CD8-positive, alpha-beta memory T cell (primary cell): ENCODE measurements at regions of chr5 and their contacts with region 1.

Region 1: GRCh38 chr5:36870399-36871040 is 6.0 kb upstream of the NIPBL start:
- DNase-seq: peak in 2 of 5 donors; percentile 59 to 72
- H3K4me3 ChIP-seq: no peak overlapping the region
- H3K4me3 Mint-ChIP-seq: peak overlapping the region in 2 of 7 donors; percentile 9 to 39
- H3K27ac ChIP-seq: no peak overlapping the region
- H3K27ac Mint-ChIP-seq: peak overlapping the region in 2 of 8 donors; percentile 22 to 46
- H3K4me1 ChIP-seq: peaks cover 25% of the 10 kb centered on the region
- H3K4me1 Mint-ChIP-seq: peaks cover 36 to 55% (median 55%) of the 10 kb centered on the region in 3 donors
- H3K27me3 ChIP-seq: no peaks in the 10 kb centered on the region
- H3K27me3 Mint-ChIP-seq: no peaks in the 10 kb centered on the region

Region 2: DNA sequence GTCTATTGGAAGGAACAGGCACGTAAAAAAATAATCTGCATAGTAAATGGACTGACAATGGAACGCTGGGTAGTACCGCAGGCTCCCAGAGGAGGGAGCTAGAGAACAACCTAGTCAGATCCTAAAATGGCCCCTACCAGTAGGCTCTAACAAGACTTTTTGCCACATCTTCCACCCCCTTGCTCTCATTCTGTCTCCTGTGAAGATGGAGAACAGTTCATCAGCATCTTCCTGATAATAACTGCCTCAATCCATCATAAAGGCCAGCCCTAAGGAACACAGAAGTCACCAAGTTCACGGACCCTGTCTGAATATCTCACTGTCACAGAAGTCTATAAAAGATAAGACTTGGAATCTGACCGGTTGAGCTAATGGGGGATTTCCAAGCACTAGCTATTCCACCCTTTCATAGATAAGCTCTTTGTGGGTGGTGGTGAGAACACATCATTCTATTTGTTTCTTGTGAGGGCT is 130.7 kb before region 1 on chr5:
- CTCF ChIA-PET with region 1: interaction called, 16 read pairs
- POLR2A ChIA-PET with region 1: no interaction called
- DNase-seq: peak; percentile 41 to 69 (median 46)
- H3K4me3 ChIP-seq: no peak overlapping the region
- H3K4me3 Mint-ChIP-seq: no peak overlapping the region
- H3K27ac ChIP-seq: no peak overlapping the region
- H3K27ac Mint-ChIP-seq: no peak overlapping the region
- H3K4me1 ChIP-seq: peaks cover 5% of the 10 kb centered on the region
- H3K4me1 Mint-ChIP-seq: peaks cover 6 to 18% (median 8%) of the 10 kb centered on the region in 3 donors
- H3K27me3 ChIP-seq: peaks cover 10% of the 10 kb centered on the region
- H3K27me3 Mint-ChIP-seq: peaks cover 22 to 51% of the 10 kb centered on the region in 2 donors